ENCODE measurements at regions of chr4 and their contacts with region 1.

Region 1: GRCh38 chr4:122577808-122578781 is 42.8 kb downstream of the IL21 start:
- DNase-seq: peak; percentile 81
- ATAC-seq: peak; percentile 71
- H3K4me3 Mint-ChIP-seq: peak overlapping the region; percentile 48
- H3K27ac Mint-ChIP-seq: peak overlapping the region; percentile 78
- H3K4me1 Mint-ChIP-seq: peaks cover 31% of the 10 kb centered on the region
- H3K27me3 Mint-ChIP-seq: no peaks in the 10 kb centered on the region

Region 2: GRCh38 chr4:121900132-121900983 is 677.7 kb before region 1 on chr4:
- CTCF ChIA-PET with region 1: interaction called, 35 read pairs
- DNase-seq: peak; percentile 68
- ATAC-seq: peak; percentile 74
- H3K4me3 Mint-ChIP-seq: no peak overlapping the region
- H3K27ac Mint-ChIP-seq: no peak overlapping the region
- H3K4me1 Mint-ChIP-seq: peaks cover 6% of the 10 kb centered on the region
- H3K27me3 Mint-ChIP-seq: peaks cover 11% of the 10 kb centered on the region

Region 3: DNA sequence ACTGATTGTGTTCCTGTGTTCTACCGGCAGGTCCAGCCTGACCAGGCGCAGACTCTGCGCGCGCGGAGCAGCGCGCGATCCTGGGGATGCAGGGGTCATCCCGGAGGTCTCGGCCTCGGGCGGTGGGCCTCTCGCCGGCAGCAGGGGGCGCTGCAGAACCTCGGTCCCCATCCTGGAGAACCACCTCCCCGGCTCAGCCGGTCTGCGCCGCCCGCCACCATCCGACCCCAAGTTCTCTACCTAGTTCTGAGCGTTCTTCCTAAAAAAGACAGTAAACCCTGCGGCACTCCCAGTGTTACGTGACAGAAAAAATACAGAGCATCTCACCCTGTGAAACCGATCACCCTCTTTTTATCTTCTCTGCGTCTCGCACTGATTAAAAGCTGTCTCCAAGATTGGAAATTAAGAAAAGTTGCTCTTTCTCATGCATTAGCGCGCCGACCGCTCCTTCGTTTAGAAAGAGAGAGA is 627.8 kb before region 1 on chr4:
- CTCF ChIA-PET with region 1: interaction called, 34 read pairs
- DNase-seq: peak; percentile 91
- ATAC-seq: peak; percentile 86
- H3K4me3 Mint-ChIP-seq: peak overlapping the region; percentile 77
- H3K27ac Mint-ChIP-seq: peak overlapping the region; percentile 29
- H3K4me1 Mint-ChIP-seq: peaks cover 16% of the 10 kb centered on the region
- H3K27me3 Mint-ChIP-seq: peaks cover 64% of the 10 kb centered on the region

Region 4: GRCh38 chr4:122309988-122310626 is 268.0 kb before region 1 on chr4:
- CTCF ChIA-PET with region 1: interaction called, 15 read pairs
- DNase-seq: no peak
- ATAC-seq: no peak
- H3K4me3 Mint-ChIP-seq: no peak overlapping the region
- H3K27ac Mint-ChIP-seq: no peak overlapping the region
- H3K4me1 Mint-ChIP-seq: peaks cover 1% of the 10 kb centered on the region
- H3K27me3 Mint-ChIP-seq: no peaks in the 10 kb centered on the region

Region 5: GRCh38 chr4:122456231-122457116 is 121.6 kb before region 1 on chr4 and contains the start of gene IL2:
- CTCF ChIA-PET with region 1: interaction called, 14 read pairs
- DNase-seq: peak; percentile 49
- ATAC-seq: peak; percentile 70
- H3K4me3 Mint-ChIP-seq: peak within 1 kb of the TSS; percentile 17
- H3K27ac Mint-ChIP-seq: peak within 1 kb of the TSS; percentile 76
- H3K4me1 Mint-ChIP-seq: peaks cover 47% of the 10 kb centered on the region
- H3K27me3 Mint-ChIP-seq: no peaks in the 10 kb centered on the region
- total RNA-seq, gene IL2: 1.1 TPM in 1 of 2 experiments, not detected in the other

Region 6: GRCh38 chr4:122930862-122931261 is 352.8 kb after region 1 on chr4:
- CTCF ChIA-PET with region 1: interaction called, 11 read pairs
- DNase-seq: no peak
- ATAC-seq: no peak
- H3K4me3 Mint-ChIP-seq: no peak overlapping the region
- H3K27ac Mint-ChIP-seq: no peak overlapping the region
- H3K4me1 Mint-ChIP-seq: peaks cover 28% of the 10 kb centered on the region
- H3K27me3 Mint-ChIP-seq: no peaks in the 10 kb centered on the region

Measured in activated CD8-positive, alpha-beta memory T cell treated with anti-CD3 and anti-CD28 coated beads, Interleukin-2, amount 10 ng/mL, durations not matched to agents 7 days and 5 days (primary cell).